Cardiac septum (tissue), 1 donor: ENCODE measurements at regions of chr21 and their contacts with region 1.

Region 1: GRCh38 chr21:41369105-41369919 is 7.5 kb downstream of the MX2 start:
- DNase-seq: peak; percentile 75

Region 2: DNA sequence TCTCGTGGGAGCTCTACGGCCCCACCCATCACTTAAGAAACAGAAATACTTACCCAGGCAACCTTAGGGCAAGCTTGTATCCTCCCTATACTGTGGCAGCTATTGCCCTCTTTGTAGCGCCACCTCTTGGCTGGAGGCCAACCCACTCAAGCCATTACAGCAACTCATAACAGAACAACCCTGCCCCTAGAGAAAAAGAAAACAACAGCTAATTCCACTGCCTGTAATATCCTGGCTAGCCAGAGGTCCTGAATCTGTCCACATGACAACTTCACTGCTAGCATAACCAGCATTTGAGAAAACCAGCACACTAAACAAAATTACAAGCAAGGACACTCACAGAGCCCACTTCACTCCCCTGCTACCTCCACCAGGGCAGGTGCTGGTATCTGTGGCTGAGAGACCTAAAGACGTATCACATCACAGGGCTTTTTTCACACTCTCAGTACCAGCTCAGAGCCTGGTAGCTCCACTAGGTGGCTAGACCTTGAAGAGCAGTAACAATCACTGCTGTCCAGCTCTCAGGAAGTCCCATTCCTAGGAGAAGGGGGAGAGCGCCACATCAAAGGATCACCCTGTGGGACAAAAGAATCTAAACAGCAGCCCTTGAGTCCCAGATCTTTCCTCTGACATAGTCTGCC is 42.3 kb after region 1 on chr21:
- intact Hi-C with region 1: loop called (anchors 5 kb)
- DNase-seq: no peak